ENCODE measurements at regions of chr10 and their contacts with region 1.

Region 1: DNA sequence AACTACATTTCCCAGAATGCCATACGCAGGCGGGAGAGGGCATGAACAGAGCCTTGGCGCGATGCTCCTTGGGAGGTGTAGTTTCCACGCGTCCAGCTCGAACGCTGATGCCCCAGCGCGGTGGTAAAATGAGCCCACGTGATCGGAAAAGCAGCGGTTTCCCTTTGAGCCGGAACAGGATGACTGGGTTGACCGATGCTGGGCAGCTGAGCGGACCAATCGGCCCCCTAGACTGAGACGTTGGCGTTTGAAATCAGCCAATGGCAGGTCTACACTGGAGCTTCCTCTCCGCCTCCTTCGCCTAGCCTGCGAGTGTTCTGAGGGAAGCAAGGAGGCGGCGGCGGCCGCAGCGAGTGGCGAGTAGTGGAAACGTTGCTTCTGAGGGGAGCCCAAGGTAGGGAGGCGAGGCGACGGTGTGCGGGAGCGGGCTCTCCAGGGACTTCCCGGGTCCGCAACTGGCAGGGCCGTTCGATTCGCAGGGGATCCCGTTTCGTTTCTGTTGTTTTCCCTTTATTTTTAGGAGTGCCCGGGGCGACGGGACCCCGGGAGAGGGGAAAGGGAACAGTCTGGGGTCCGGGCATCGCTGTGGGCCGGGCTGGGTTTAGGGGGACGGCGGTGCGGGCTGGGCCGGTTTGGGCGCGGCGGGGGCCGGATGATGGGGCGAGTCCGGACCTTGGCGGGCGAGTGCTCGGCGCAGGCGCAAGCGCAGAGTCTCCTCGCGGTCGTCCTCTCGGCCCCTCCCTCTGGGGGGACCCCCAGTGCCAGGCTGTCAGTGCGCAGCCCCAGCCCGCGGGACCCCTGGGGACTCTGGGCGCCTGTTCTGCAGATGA is at the start of gene BUB3:
- DNase-seq: peak; percentile 98
- H3K4me3 Mint-ChIP-seq: peak within 1 kb of the TSS; percentile 100
- H3K27ac Mint-ChIP-seq: peak within 1 kb of the TSS; percentile 100
- H3K4me1 Mint-ChIP-seq: peaks cover 61% of the 10 kb centered on the region
- H3K27me3 Mint-ChIP-seq: peaks cover 9% of the 10 kb centered on the region
- total RNA-seq, gene BUB3: 259 to 265 TPM

Region 2: GRCh38 chr10:122953827-122954730 is 200.2 kb before region 1 on chr10 and contains the start of gene C10orf88:
- CTCF ChIA-PET with region 1: no interaction called
- POLR2A ChIA-PET with region 1: no interaction called
- intact Hi-C with region 1: loop called (anchors 5 kb)
- DNase-seq: peak; percentile 98
- H3K4me3 Mint-ChIP-seq: peak within 1 kb of the TSS; percentile 82
- H3K27ac Mint-ChIP-seq: peak within 1 kb of the TSS; percentile 80
- H3K4me1 Mint-ChIP-seq: peaks cover 30% of the 10 kb centered on the region
- H3K27me3 Mint-ChIP-seq: peaks cover 1% of the 10 kb centered on the region
- total RNA-seq, gene C10orf88: 8.3 to 9.2 TPM

Region 3: GRCh38 chr10:123132576-123133477 is 21.5 kb before region 1 on chr10:
- CTCF ChIA-PET with region 1: interaction called, 24 read pairs
- POLR2A ChIA-PET with region 1: interaction called, 6 read pairs
- intact Hi-C with region 1: loop called (anchors 2 kb)
- DNase-seq: peak; percentile 92
- H3K4me3 Mint-ChIP-seq: peak overlapping the region; percentile 64
- H3K27ac Mint-ChIP-seq: no peak overlapping the region
- H3K4me1 Mint-ChIP-seq: peaks cover 24% of the 10 kb centered on the region
- H3K27me3 Mint-ChIP-seq: peaks cover 58% of the 10 kb centered on the region

Region 4: GRCh38 chr10:123287594-123288247 is 133.4 kb after region 1 on chr10:
- CTCF ChIA-PET with region 1: no interaction called
- POLR2A ChIA-PET with region 1: interaction called, 3 read pairs
- intact Hi-C with region 1: loop called (anchors 1 kb)
- DNase-seq: peak; percentile 69
- H3K4me3 Mint-ChIP-seq: no peak overlapping the region
- H3K27ac Mint-ChIP-seq: peak overlapping the region; percentile 54
- H3K4me1 Mint-ChIP-seq: peaks cover 20% of the 10 kb centered on the region
- H3K27me3 Mint-ChIP-seq: peaks cover 8% of the 10 kb centered on the region

Region 5: GRCh38 chr10:124461438-124462347 is 1307.4 kb after region 1 on chr10 and contains the start of gene LHPP:
- CTCF ChIA-PET with region 1: interaction called, 3 read pairs
- POLR2A ChIA-PET with region 1: no interaction called
- intact Hi-C with region 1: loop called (anchors 5 kb)
- DNase-seq: peak; percentile 91
- H3K4me3 Mint-ChIP-seq: peak within 1 kb of the TSS; percentile 80
- H3K27ac Mint-ChIP-seq: peak within 1 kb of the TSS; percentile 66
- H3K4me1 Mint-ChIP-seq: peaks cover 23% of the 10 kb centered on the region
- H3K27me3 Mint-ChIP-seq: peaks cover 3% of the 10 kb centered on the region
- total RNA-seq, gene LHPP: 10.1 to 12.3 TPM